Ascending aorta (tissue), 2 donors: ENCODE measurements at regions of chr13 and their contacts with region 1.

Region 1: GRCh38 chr13:111248822-111249221 is 71.6 kb upstream of the TEX29 start:
- DNase-seq: no peak
- H3K4me3 ChIP-seq: no peak overlapping the region
- H3K27ac ChIP-seq: peak overlapping the region in 1 of 2 donors; percentile 33
- H3K4me1 ChIP-seq: peaks cover 0 to 32% of the 10 kb centered on the region in 2 donors
- H3K27me3 ChIP-seq: no peaks in the 10 kb centered on the region
- CTCF ChIP-seq: no peak

Region 2: GRCh38 chr13:111202745-111203144 is 46.1 kb before region 1 on chr13:
- intact Hi-C with region 1: no loop called
- DNase-seq: peak in 1 of 2 donors; percentile 69
- H3K4me3 ChIP-seq: peak overlapping the region in 1 of 2 donors; percentile 47
- H3K27ac ChIP-seq: peak overlapping the region; percentile 52 to 62
- H3K4me1 ChIP-seq: peaks cover 15 to 61% of the 10 kb centered on the region in 2 donors
- H3K27me3 ChIP-seq: no peaks in the 10 kb centered on the region
- CTCF ChIP-seq: no peak

Region 3: GRCh38 chr13:111228262-111229144 is 20.3 kb before region 1 on chr13:
- intact Hi-C with region 1: loop called (anchors 2 kb)
- DNase-seq: peak; percentile 24 to 92
- H3K4me3 ChIP-seq: peak overlapping the region in 1 of 2 donors; percentile 18
- H3K27ac ChIP-seq: peak overlapping the region; percentile 50 to 56
- H3K4me1 ChIP-seq: peaks cover 2 to 25% of the 10 kb centered on the region in 2 donors
- H3K27me3 ChIP-seq: no peaks in the 10 kb centered on the region
- CTCF ChIP-seq: no peak

Region 4: DNA sequence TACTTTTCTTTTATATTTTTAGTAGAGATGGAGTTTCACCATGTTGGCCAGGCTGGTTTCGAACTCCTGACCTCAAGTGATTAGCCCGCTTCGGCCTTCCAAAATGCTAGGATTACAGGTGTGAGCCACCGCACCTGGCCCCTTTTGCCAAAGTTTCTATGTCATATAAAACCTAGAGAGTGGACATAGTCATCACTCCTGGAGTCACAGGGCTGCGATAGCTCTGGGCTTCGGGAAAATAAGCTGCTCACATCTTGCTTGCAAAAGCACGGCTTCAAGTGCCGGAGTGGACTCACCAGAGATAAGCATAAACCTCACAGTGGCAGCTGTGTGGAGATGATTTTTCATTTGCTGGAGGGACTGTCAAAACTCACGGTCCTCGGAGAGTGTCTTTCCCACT is 242.8 kb after region 1 on chr13:
- intact Hi-C with region 1: no loop called
- DNase-seq: peak in 1 of 2 donors; percentile 15
- H3K4me3 ChIP-seq: no peak overlapping the region
- H3K27ac ChIP-seq: no peak overlapping the region
- H3K4me1 ChIP-seq: no peaks in the 10 kb centered on the region
- H3K27me3 ChIP-seq: no peaks in the 10 kb centered on the region
- CTCF ChIP-seq: no peak